Activated CD4-positive, alpha-beta memory T cell treated with anti-CD3 and anti-CD28 coated beads for 36 hours (primary cell): ENCODE measurements at regions of chr2 and their contacts with region 1.

Region 1: GRCh38 chr2:101001691-101002561 is at the start of gene RPL31:
- DNase-seq: peak; percentile 98
- H3K4me3 Mint-ChIP-seq: peak within 1 kb of the TSS; percentile 90
- H3K27ac Mint-ChIP-seq: peak within 1 kb of the TSS; percentile 87
- H3K4me1 Mint-ChIP-seq: peaks cover 40% of the 10 kb centered on the region
- H3K27me3 Mint-ChIP-seq: no peaks in the 10 kb centered on the region
- total RNA-seq, gene RPL31: 1,809 to 1,825 TPM

Region 2: GRCh38 chr2:101012706-101013181 is 10.8 kb after region 1 on chr2:
- CTCF ChIA-PET with region 1: interaction called, 21 read pairs
- POLR2A ChIA-PET with region 1: interaction called, 7 read pairs
- intact Hi-C with region 1: no loop called
- DNase-seq: peak; percentile 24
- H3K4me3 Mint-ChIP-seq: no peak overlapping the region
- H3K27ac Mint-ChIP-seq: no peak overlapping the region
- H3K4me1 Mint-ChIP-seq: peaks cover 29% of the 10 kb centered on the region
- H3K27me3 Mint-ChIP-seq: no peaks in the 10 kb centered on the region